CD8-positive, alpha-beta T cell (primary cell): ENCODE measurements at regions of chr1 and their contacts with region 1.

Region 1: DNA sequence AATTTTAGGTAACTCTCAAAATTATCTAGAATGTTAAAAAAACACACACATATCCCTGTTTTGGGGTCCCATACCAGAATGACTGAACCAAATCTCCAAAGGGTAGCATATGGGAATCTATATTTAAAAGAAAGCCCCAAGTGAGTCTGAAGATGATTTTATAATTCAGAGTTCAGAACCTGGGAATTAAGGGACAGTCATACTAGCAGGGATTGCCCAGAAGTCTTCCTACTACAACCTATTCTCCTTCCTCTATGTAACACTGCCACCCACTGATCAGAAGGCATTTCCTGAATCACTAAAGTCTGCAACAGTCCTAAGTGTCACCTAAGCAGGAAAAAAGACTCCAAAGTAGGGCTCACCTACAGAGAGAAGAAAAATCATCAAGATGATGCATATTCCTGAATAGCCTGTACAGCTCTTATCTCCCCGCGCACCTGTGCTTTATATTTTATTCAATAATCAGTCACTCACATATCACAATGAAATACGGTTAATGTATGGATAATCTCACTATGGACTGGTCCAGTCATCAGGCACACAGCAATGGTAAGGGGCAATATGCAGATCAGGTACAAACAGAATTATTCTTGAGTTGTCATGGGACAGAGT is 4.9 kb downstream of the RGS1 start:
- DNase-seq: peak in 3 of 9 experiments; percentile 6 to 73 (median 62)
- ATAC-seq: peak; percentile 29
- H3K4me3 ChIP-seq: no peak overlapping the region
- H3K4me3 Mint-ChIP-seq: no peak overlapping the region
- H3K27ac ChIP-seq: no peak overlapping the region
- H3K27ac Mint-ChIP-seq: peak overlapping the region; percentile 11
- H3K4me1 ChIP-seq: peaks cover 8% of the 10 kb centered on the region
- H3K4me1 Mint-ChIP-seq: peaks cover 18% of the 10 kb centered on the region
- H3K27me3 ChIP-seq: no peaks in the 10 kb centered on the region
- H3K27me3 Mint-ChIP-seq: no peaks in the 10 kb centered on the region
- CTCF ChIP-seq: no peak

Region 2: DNA sequence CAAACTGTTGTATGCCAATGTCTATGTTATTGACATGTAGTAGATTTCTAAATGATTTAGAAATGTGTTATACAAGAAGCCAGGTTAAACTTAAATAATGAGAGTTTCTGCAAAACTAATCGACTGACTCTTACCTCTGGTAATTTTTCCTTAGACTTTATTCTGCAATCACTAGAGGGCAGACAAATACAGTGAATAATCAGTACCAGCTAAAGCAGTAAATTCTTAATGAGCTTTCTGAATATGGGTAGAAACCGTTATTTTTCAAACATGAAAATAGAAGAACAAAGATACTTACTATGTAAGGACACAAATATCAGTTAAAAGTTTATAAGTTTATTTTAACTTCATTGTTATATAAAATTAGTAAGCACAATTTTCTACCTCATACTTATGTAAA is 102.8 kb before region 1 on chr1:
- CTCF ChIA-PET with region 1: interaction called, 70 read pairs
- POLR2A ChIA-PET with region 1: interaction called, 3 read pairs
- intact Hi-C with region 1: loop called (anchors 1 to 2 kb)
- DNase-seq: peak in 2 of 9 experiments; percentile 52 to 65
- ATAC-seq: peak; percentile 77
- H3K4me3 ChIP-seq: no peak overlapping the region
- H3K4me3 Mint-ChIP-seq: no peak overlapping the region
- H3K27ac ChIP-seq: no peak overlapping the region
- H3K27ac Mint-ChIP-seq: no peak overlapping the region
- H3K4me1 ChIP-seq: no peaks in the 10 kb centered on the region
- H3K4me1 Mint-ChIP-seq: no peaks in the 10 kb centered on the region
- H3K27me3 ChIP-seq: peaks cover 0 to 2% of the 10 kb centered on the region in 2 experiments
- H3K27me3 Mint-ChIP-seq: no peaks in the 10 kb centered on the region
- CTCF ChIP-seq: peak; percentile 64

Region 3: GRCh38 chr1:192506741-192507155 is 73.7 kb before region 1 on chr1:
- CTCF ChIA-PET with region 1: no interaction called
- POLR2A ChIA-PET with region 1: no interaction called
- intact Hi-C with region 1: loop called in 1 of 2 experiments (anchors 2 kb)
- DNase-seq: peak in 2 of 9 experiments; percentile 50 to 59
- ATAC-seq: no peak
- H3K4me3 ChIP-seq: no peak overlapping the region
- H3K4me3 Mint-ChIP-seq: no peak overlapping the region
- H3K27ac ChIP-seq: no peak overlapping the region
- H3K27ac Mint-ChIP-seq: no peak overlapping the region
- H3K4me1 ChIP-seq: no peaks in the 10 kb centered on the region
- H3K4me1 Mint-ChIP-seq: no peaks in the 10 kb centered on the region
- H3K27me3 ChIP-seq: no peaks in the 10 kb centered on the region
- H3K27me3 Mint-ChIP-seq: no peaks in the 10 kb centered on the region
- CTCF ChIP-seq: no peak

Region 4: DNA sequence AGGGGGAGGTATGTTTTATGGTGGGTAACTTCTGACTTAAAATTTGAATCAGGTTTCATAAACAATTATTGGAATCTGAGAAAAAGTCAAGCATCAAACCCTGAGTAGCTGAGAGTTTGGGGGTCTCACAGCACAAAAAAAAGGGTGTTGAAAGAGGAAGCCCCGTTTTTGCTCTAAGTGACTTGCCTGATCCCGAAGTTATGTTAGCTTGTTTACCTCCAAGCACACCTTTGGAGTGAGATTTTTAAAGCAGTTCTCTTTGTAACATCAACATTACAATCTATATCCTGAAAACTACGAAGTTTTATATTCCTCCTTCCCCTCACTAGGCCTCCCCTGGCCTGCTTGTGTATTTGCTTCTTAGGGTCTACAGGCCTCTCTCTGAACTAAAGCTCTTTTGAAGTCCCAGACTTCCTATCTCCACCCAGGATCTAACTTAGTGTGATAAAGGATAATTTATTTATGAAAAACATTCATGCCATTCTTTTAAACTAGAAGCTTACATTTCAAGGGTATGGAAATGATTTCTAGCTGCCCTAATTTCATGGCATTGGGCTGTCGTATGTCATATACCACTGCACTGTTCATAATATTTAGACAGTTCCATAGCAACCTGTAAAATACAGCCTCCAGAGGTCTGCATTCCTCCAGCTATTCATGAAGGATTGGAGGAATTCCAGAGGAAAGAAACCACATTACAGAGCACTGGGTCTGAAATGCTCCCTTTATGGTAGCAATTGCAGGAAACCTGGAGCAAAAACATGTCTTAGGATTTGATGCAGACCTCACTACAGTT is 41.0 kb before region 1 on chr1:
- CTCF ChIA-PET with region 1: interaction called, 3 read pairs
- POLR2A ChIA-PET with region 1: interaction called, 3 read pairs
- intact Hi-C with region 1: loop called in 1 of 2 experiments (anchors 2 kb)
- DNase-seq: peak in 1 of 9 experiments; percentile 46
- ATAC-seq: peak; percentile 28
- H3K4me3 ChIP-seq: no peak overlapping the region
- H3K4me3 Mint-ChIP-seq: peak overlapping the region; percentile 3
- H3K27ac ChIP-seq: peak overlapping the region; percentile 18 to 19
- H3K27ac Mint-ChIP-seq: peak overlapping the region; percentile 88
- H3K4me1 ChIP-seq: peaks cover 13% of the 10 kb centered on the region
- H3K4me1 Mint-ChIP-seq: peaks cover 28% of the 10 kb centered on the region
- H3K27me3 ChIP-seq: no peaks in the 10 kb centered on the region
- H3K27me3 Mint-ChIP-seq: no peaks in the 10 kb centered on the region
- CTCF ChIP-seq: no peak

Region 5: GRCh38 chr1:192609110-192610079 is 28.9 kb after region 1 on chr1:
- CTCF ChIA-PET with region 1: interaction called, 6 read pairs
- POLR2A ChIA-PET with region 1: interaction called, 4 read pairs
- intact Hi-C with region 1: loop called (anchors 1 to 2 kb)
- DNase-seq: peak; percentile 24 to 88 (median 58)
- ATAC-seq: peak; percentile 95
- H3K4me3 ChIP-seq: no peak overlapping the region
- H3K4me3 Mint-ChIP-seq: peak overlapping the region; percentile 69
- H3K27ac ChIP-seq: peak overlapping the region; percentile 20 to 57
- H3K27ac Mint-ChIP-seq: peak overlapping the region; percentile 86
- H3K4me1 ChIP-seq: peaks cover 14% of the 10 kb centered on the region
- H3K4me1 Mint-ChIP-seq: peaks cover 16% of the 10 kb centered on the region
- H3K27me3 ChIP-seq: peaks cover 0 to 3% of the 10 kb centered on the region in 2 experiments
- H3K27me3 Mint-ChIP-seq: no peaks in the 10 kb centered on the region
- CTCF ChIP-seq: no peak

Region 6: GRCh38 chr1:192860478-192861185 is 280.2 kb after region 1 on chr1:
- CTCF ChIA-PET with region 1: no interaction called
- POLR2A ChIA-PET with region 1: no interaction called
- intact Hi-C with region 1: no loop called
- DNase-seq: no peak
- ATAC-seq: no peak
- H3K4me3 ChIP-seq: no peak overlapping the region
- H3K4me3 Mint-ChIP-seq: no peak overlapping the region
- H3K27ac ChIP-seq: no peak overlapping the region
- H3K27ac Mint-ChIP-seq: no peak overlapping the region
- H3K4me1 ChIP-seq: no peaks in the 10 kb centered on the region
- H3K4me1 Mint-ChIP-seq: no peaks in the 10 kb centered on the region
- H3K27me3 ChIP-seq: no peaks in the 10 kb centered on the region
- H3K27me3 Mint-ChIP-seq: peaks cover 3% of the 10 kb centered on the region
- CTCF ChIP-seq: no peak